ENCODE measurements at regions of chr6 and their contacts with region 1.

Region 1: DNA sequence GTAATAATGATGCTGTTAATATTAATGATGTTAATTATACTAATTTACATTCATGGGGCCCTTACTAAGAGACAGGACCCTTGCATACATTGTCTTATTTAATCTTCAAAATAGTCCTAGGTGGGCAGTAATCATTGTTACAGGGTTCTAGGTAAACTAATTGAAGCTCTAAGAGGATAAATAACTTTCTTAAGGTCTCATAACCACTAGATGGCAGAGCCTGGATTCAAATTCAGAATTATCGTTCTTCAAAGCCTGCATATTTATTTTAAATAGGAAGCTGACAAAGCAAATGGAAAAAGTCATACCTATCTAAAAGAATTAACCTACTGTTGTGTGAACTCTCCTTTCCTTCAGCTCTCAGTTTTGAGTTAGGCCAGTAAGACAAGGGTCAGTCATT is 23.5 kb downstream of the PTCHD4 start:
- DNase-seq: no peak
- H3K4me3 Mint-ChIP-seq: no peak overlapping the region
- H3K27ac Mint-ChIP-seq: no peak overlapping the region
- H3K4me1 Mint-ChIP-seq: no peaks in the 10 kb centered on the region
- H3K27me3 Mint-ChIP-seq: no peaks in the 10 kb centered on the region
- CTCF ChIP-seq: no peak

Region 2: DNA sequence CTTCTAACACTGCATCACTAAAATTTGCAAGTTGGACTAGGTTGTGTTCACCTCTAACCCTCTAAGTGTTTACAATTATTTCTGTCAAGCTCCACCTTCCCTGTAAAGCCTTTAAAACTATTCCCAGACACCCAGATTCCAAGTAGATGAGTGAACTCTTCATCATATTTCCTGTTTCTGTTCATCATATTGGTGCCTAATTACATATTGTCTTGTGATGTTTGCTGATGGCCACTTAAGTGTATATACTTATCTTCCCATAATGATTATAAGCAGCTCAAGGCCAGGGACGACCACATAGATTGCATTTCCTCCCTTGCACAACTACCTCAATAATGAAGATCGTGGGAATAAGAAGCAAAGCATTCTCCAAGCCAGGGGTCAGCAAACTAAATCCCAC is 794.5 kb before region 1 on chr6:
- CTCF ChIA-PET with region 1: no interaction called
- intact Hi-C with region 1: no loop called
- DNase-seq: no peak
- H3K4me3 Mint-ChIP-seq: peak overlapping the region; percentile 45
- H3K27ac Mint-ChIP-seq: peak overlapping the region; percentile 67
- H3K4me1 Mint-ChIP-seq: peaks cover 95% of the 10 kb centered on the region
- H3K27me3 Mint-ChIP-seq: no peaks in the 10 kb centered on the region
- CTCF ChIP-seq: no peak

Region 3: DNA sequence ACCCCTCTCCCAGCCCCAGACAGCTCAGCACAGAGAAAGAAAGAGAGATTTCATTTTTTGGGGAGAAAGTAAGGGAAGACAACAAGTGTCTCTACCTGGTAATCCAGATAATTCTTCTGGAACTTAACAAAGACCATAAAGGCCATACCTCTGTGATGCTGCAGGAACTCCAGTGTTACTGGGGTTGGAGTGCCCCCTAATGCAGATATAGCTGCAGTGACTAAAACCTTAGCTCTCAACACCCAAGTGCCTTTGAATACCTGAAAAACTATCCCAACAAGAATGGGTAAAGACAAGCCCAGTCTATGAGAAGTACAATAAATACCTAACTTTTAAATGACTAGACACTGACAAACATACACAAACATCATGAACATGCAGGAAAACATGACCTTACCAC is 388.8 kb after region 1 on chr6:
- CTCF ChIA-PET with region 1: interaction called, 14 read pairs
- intact Hi-C with region 1: loop called (anchors 1 kb)
- DNase-seq: peak; percentile 10
- H3K4me3 Mint-ChIP-seq: no peak overlapping the region
- H3K27ac Mint-ChIP-seq: no peak overlapping the region
- H3K4me1 Mint-ChIP-seq: no peaks in the 10 kb centered on the region
- H3K27me3 Mint-ChIP-seq: no peaks in the 10 kb centered on the region
- CTCF ChIP-seq: no peak

Region 4: GRCh38 chr6:49423817-49424216 is 1336.4 kb after region 1 on chr6:
- CTCF ChIA-PET with region 1: no interaction called
- intact Hi-C with region 1: loop called (anchors 5 kb)
- DNase-seq: no peak
- H3K4me3 Mint-ChIP-seq: no peak overlapping the region
- H3K27ac Mint-ChIP-seq: no peak overlapping the region
- H3K4me1 Mint-ChIP-seq: no peaks in the 10 kb centered on the region
- H3K27me3 Mint-ChIP-seq: no peaks in the 10 kb centered on the region
- CTCF ChIP-seq: peak; percentile 34

Measured in Calu3 (cell line).